ENCODE measurements at regions of chr11 and their contacts with region 1.

Region 1: DNA sequence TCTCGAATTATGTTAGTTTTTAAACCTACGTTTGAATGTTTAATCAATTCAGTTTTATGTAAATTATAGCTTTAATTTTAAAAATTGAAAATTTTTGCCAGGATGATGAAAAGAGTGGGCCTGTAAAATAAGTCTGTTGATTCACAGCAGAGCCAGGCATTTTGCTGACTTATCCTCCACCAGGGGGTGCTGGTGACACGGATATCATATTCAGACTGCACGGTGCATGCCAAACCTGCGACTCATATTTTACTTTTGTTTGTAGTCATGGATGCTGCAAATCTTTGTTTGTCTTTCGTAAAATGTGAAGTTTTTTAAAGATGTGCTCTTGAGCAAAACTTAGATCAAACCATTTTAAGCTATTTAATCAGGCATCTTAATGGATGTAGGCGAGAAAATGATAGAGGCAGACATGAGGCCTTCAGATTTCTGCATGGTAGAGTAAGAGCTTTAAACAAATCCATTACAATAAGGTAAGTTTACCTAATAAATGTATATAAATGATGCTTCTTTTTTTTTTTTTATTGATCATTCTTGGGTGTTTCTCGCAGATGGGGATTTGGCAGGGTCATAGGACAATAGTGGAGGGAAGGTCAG is 3.6 kb upstream of the OR8B3 start:
- DNase-seq: peak; percentile 64
- H3K4me3 ChIP-seq: no peak overlapping the region
- H3K27ac ChIP-seq: no peak overlapping the region
- H3K4me1 ChIP-seq: no peaks in the 10 kb centered on the region
- H3K27me3 ChIP-seq: peaks cover 3% of the 10 kb centered on the region
- CTCF ChIP-seq: peak; percentile 83 to 90

Region 2: DNA sequence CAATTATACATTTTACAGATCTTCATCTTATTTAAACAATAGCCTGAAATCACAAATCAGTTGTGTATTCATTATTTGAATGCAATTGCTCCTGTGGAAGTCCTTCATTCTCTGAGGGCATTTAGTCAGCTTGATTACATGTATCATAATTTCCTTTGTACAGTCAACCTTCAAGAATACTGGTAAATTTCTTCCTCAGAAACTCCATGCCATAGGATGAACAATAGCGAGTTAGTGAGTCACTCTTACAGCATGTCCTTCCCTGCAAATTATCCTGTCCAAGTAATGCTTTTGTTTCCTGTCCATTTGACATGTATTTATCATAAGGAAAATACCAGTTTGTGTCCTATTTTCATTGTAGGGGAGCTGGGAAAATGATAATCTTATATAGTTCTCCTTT is 428.6 kb before region 1 on chr11:
- CTCF ChIA-PET with region 1: no interaction called
- dilution Hi-C with region 1: no loop called
- in situ Hi-C with region 1: no loop called
- intact Hi-C with region 1: no loop called
- DNase-seq: peak; percentile 93
- H3K4me3 ChIP-seq: no peak overlapping the region
- H3K27ac ChIP-seq: peak overlapping the region; percentile 98
- H3K4me1 ChIP-seq: peaks cover 42% of the 10 kb centered on the region
- H3K27me3 ChIP-seq: no peaks in the 10 kb centered on the region
- CTCF ChIP-seq: no peak

Region 3: GRCh38 chr11:124070915-124071635 is 331.3 kb before region 1 on chr11:
- CTCF ChIA-PET with region 1: no interaction called
- dilution Hi-C with region 1: no loop called
- in situ Hi-C with region 1: no loop called
- intact Hi-C with region 1: loop called (anchors 1 kb)
- DNase-seq: peak; percentile 50
- H3K4me3 ChIP-seq: no peak overlapping the region
- H3K27ac ChIP-seq: no peak overlapping the region
- H3K4me1 ChIP-seq: peaks cover 11% of the 10 kb centered on the region
- H3K27me3 ChIP-seq: no peaks in the 10 kb centered on the region
- CTCF ChIP-seq: peak; percentile 68 to 71

Region 4: GRCh38 chr11:124285610-124286344 is 116.6 kb before region 1 on chr11:
- CTCF ChIA-PET with region 1: no interaction called
- dilution Hi-C with region 1: no loop called
- in situ Hi-C with region 1: no loop called
- intact Hi-C with region 1: no loop called
- DNase-seq: peak; percentile 70
- H3K4me3 ChIP-seq: no peak overlapping the region
- H3K27ac ChIP-seq: no peak overlapping the region
- H3K4me1 ChIP-seq: peaks cover 8% of the 10 kb centered on the region
- H3K27me3 ChIP-seq: peaks cover 2% of the 10 kb centered on the region
- CTCF ChIP-seq: no peak

Region 5: GRCh38 chr11:124586238-124586860 is 183.9 kb after region 1 on chr11:
- CTCF ChIA-PET with region 1: no interaction called
- dilution Hi-C with region 1: no loop called
- in situ Hi-C with region 1: no loop called
- intact Hi-C with region 1: loop called (anchors 1 kb)
- DNase-seq: peak; percentile 37
- H3K4me3 ChIP-seq: no peak overlapping the region
- H3K27ac ChIP-seq: no peak overlapping the region
- H3K4me1 ChIP-seq: no peaks in the 10 kb centered on the region
- H3K27me3 ChIP-seq: peaks cover 4% of the 10 kb centered on the region
- CTCF ChIP-seq: peak; percentile 56 to 73

Region 6: DNA sequence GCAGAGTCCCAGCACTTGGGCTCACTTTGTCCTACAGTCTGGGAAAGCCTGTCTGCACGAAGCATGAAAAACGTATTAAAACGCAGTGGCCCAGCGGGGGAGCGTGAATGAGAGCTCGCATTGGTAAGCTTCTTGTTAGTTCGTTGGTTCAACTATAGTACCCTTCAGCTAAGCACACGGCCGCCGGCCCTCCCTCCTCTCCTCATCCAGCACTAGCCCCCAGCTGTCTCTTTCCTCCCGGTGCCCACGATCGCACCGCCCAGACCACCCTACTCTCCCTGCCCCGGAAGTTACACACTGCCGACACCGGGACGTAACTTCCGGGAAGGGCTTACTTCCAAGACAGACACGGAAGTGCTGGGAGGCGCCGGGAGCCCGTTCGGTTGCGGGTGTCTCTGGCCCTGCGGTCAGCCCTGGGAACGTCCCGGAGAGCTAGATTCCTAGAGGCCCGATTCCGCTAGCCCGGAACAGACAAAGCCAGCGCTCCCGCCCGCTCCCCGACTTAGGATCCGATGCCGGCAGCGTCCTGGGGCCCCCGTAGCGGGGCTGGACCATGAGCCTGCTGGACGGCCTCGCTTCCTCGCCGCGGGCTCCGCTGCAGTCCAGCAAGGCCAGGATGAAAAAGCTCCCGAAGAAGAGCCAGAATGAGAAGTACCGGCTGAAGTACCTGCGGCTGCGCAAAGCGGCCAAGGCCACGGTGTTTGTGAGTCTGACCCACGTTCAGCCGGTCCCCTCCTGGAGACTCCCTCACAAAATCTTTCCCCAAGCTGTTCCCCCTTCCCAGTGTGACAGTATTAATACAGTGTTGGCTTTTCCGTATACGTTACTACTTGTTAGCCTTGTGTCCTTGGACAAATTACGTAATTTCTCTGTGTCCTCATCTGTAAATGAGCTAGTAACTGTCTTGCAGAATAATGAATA is 220.4 kb after region 1 on chr11 and contains the start of gene TBRG1:
- CTCF ChIA-PET with region 1: no interaction called
- dilution Hi-C with region 1: no loop called
- in situ Hi-C with region 1: no loop called
- intact Hi-C with region 1: loop called (anchors 1 kb)
- DNase-seq: peak; percentile 82
- H3K4me3 ChIP-seq: peak within 1 kb of the TSS; percentile 71 to 97 (median 96)
- H3K27ac ChIP-seq: peak within 1 kb of the TSS; percentile 78
- H3K4me1 ChIP-seq: peaks cover 19% of the 10 kb centered on the region
- H3K27me3 ChIP-seq: no peaks in the 10 kb centered on the region
- CTCF ChIP-seq: no peak
- total RNA-seq, gene TBRG1: 28.8 to 36.9 TPM

Region 7: GRCh38 chr11:124739479-124740276 is 337.3 kb after region 1 on chr11 and contains the start of gene NRGN:
- CTCF ChIA-PET with region 1: no interaction called
- dilution Hi-C with region 1: no loop called
- in situ Hi-C with region 1: no loop called
- intact Hi-C with region 1: loop called (anchors 10 kb)
- DNase-seq: peak; percentile 81
- H3K4me3 ChIP-seq: peak within 1 kb of the TSS; percentile 50 to 62 (median 52)
- H3K27ac ChIP-seq: no peak within 1 kb of the TSS
- H3K4me1 ChIP-seq: peaks cover 12% of the 10 kb centered on the region
- H3K27me3 ChIP-seq: no peaks in the 10 kb centered on the region
- CTCF ChIP-seq: no peak
- total RNA-seq, gene NRGN: 3.8 TPM in 1 of 2 donors, not detected in the other

Region 8: GRCh38 chr11:124758317-124759203 is 356.1 kb after region 1 on chr11:
- CTCF ChIA-PET with region 1: no interaction called
- dilution Hi-C with region 1: no loop called
- in situ Hi-C with region 1: loop called in 1 of 2 experiments (anchors 25 kb)
- intact Hi-C with region 1: no loop called
- DNase-seq: peak; percentile 45
- H3K4me3 ChIP-seq: peak overlapping the region in 2 of 3 experiments; percentile 10 to 22
- H3K27ac ChIP-seq: no peak overlapping the region
- H3K4me1 ChIP-seq: peaks cover 20% of the 10 kb centered on the region
- H3K27me3 ChIP-seq: peaks cover 25% of the 10 kb centered on the region
- CTCF ChIP-seq: peak; percentile 49 to 73

Region 9: GRCh38 chr11:124865921-124866583 is 463.6 kb after region 1 on chr11:
- CTCF ChIA-PET with region 1: interaction called, 5 read pairs
- dilution Hi-C with region 1: no loop called
- in situ Hi-C with region 1: no loop called
- intact Hi-C with region 1: loop called (anchors 10 kb)
- DNase-seq: no peak
- H3K4me3 ChIP-seq: peak overlapping the region in 1 of 3 experiments; percentile 11
- H3K27ac ChIP-seq: no peak overlapping the region
- H3K4me1 ChIP-seq: peaks cover 25% of the 10 kb centered on the region
- H3K27me3 ChIP-seq: peaks cover 68% of the 10 kb centered on the region
- CTCF ChIP-seq: peak; percentile 39 to 75

Region 10: DNA sequence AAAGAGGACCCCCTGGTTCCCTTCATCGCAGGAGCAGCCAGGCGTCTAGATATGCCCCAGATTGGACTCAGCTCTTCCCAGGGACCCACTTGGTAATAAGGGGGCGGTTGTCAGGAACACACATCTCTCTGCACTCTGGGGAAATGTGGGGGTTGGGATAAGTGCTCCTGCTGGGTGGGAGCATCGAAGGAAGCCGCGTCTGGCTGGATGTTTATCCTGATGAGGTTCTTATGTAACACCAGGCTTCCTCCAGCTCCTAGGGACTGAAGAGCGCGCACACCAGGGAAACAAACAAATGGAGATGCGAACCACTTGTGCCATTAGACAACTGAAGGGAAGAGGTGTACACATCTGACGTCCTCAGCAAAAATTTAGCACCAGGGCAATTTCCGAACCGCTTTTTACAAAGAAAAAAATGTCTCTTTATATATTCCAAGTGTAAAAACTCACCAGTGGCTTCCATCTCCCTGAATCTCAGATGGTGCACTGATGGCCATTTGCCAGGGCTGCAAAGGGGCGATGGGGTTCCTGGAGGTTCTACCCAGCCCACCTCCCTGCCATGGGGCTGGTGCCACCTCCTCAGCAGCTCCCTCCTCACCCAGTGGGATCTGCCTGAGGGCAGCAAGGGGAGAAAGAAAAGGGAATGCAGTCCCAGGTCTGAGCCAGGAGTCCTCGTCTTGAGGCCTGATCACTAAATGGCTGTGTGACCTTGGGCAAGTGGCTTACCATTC is 851.5 kb after region 1 on chr11:
- CTCF ChIA-PET with region 1: no interaction called
- dilution Hi-C with region 1: no loop called
- in situ Hi-C with region 1: no loop called
- intact Hi-C with region 1: no loop called
- DNase-seq: no peak
- H3K4me3 ChIP-seq: no peak overlapping the region
- H3K27ac ChIP-seq: no peak overlapping the region
- H3K4me1 ChIP-seq: no peaks in the 10 kb centered on the region
- H3K27me3 ChIP-seq: no peaks in the 10 kb centered on the region
- CTCF ChIP-seq: no peak

Measured in mammary epithelial cell (primary cell).